ENCODE measurements at regions of chr5 and their contacts with region 1.

Region 1: GRCh38 chr5:139949710-139950109 is 93.4 kb downstream of the NRG2 start:
- DNase-seq: peak in 3 of 5 donors; percentile 46 to 74 (median 66)
- ATAC-seq: peak; percentile 48 to 86 (median 67)
- H3K4me3 ChIP-seq: no peak overlapping the region
- H3K27ac ChIP-seq: peak overlapping the region in 6 of 12 donors; percentile 28 to 70 (median 46)
- H3K4me1 ChIP-seq: peaks cover 0 to 48% (median 15%) of the 10 kb centered on the region in 12 donors
- H3K27me3 ChIP-seq: no peaks in the 10 kb centered on the region
- CTCF ChIP-seq: no peak
- POLR2A ChIP-seq: no peak

Region 2: GRCh38 chr5:139882961-139883539 is 66.7 kb before region 1 on chr5:
- intact Hi-C with region 1: loop called in 1 of 10 experiments (anchors 5 kb)
- DNase-seq: no peak
- ATAC-seq: peak in 1 of 4 donors; percentile 12
- H3K4me3 ChIP-seq: no peak overlapping the region
- H3K27ac ChIP-seq: peak overlapping the region in 1 of 12 donors; percentile 47
- H3K4me1 ChIP-seq: peaks cover 0 to 34% (median 15%) of the 10 kb centered on the region in 12 donors
- H3K27me3 ChIP-seq: no peaks in the 10 kb centered on the region
- CTCF ChIP-seq: no peak
- POLR2A ChIP-seq: no peak

Region 3: DNA sequence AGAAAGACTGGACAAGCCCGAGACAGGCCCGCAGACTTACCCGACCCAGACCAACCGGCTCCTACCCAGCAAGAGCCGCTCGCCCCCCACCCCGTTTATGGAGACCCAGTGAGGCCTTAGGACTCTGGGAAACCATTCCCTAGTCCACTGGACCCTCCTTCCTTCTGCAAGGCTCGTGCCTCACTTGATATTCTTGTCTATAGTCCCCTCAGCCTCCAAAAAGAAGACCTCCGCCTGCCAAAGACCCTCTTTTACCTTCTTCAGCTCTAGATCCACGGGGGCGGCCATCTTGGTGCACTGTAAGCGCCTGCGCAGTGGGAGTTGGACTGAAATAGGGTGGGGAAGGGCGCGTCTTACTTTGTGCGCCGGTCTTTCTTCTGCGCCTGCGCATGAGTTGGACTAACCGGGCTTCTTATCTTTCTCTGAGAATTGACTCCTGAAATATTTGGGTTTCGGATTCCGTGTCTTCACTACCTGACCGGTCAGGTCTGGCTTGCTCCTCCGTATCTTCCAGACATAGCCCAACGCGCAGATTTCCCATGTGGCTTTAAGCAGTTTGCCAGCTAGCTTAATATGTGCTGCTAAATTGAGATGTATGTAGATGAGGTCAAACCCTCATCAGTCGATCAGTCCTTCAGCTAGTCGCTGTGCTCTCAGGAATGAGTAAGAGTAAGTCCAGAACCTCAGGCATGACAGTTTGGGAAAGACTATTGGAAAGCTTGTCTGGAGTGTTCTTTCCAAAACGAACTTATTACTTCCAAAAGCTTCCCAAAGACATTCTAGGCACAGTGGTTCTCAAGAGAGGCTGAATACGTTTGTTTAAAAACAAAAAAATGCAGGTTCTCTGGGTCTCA is 353.3 kb after region 1 on chr5 and contains the start of gene PFDN1:
- intact Hi-C with region 1: no loop called
- DNase-seq: peak; percentile 93 to 97 (median 95)
- ATAC-seq: peak; percentile 98 to 99 (median 99)
- H3K4me3 ChIP-seq: peak within 1 kb of the TSS; percentile 57 to 97 (median 80)
- H3K27ac ChIP-seq: peak within 1 kb of the TSS; percentile 51 to 94 (median 87)
- H3K4me1 ChIP-seq: peaks cover 3 to 39% (median 26%) of the 10 kb centered on the region in 12 donors
- H3K27me3 ChIP-seq: no peaks in the 10 kb centered on the region
- CTCF ChIP-seq: no peak
- POLR2A ChIP-seq: no peak
- total RNA-seq, gene PFDN1: 53.8 to 130 (median 72.3) TPM